Naive thymus-derived CD8-positive, alpha-beta T cell (primary cell): ENCODE measurements at regions of chr7 and their contacts with region 1.

Region 1: GRCh38 chr7:105849122-105849855 is 27.1 kb downstream of the ATXN7L1 start:
- DNase-seq: peak in 9 of 10 donors; percentile 6 to 80 (median 53)
- ATAC-seq: peak; percentile 90 to 94
- H3K4me3 Mint-ChIP-seq: peak overlapping the region; percentile 48 to 87 (median 76)
- H3K27ac Mint-ChIP-seq: peak overlapping the region; percentile 83 to 97 (median 91)
- H3K4me1 Mint-ChIP-seq: peaks cover 30 to 69% (median 64%) of the 10 kb centered on the region in 4 donors
- H3K27me3 Mint-ChIP-seq: no peaks in the 10 kb centered on the region

Region 2: GRCh38 chr7:105876091-105876963 is 27.0 kb after region 1 on chr7 and contains the start of gene ATXN7L1:
- POLR2A ChIA-PET with region 1: interaction called, 20 read pairs
- DNase-seq: peak; percentile 76 to 96 (median 86)
- ATAC-seq: peak; percentile 94 to 95
- H3K4me3 Mint-ChIP-seq: peak within 1 kb of the TSS; percentile 95 to 99 (median 98)
- H3K27ac Mint-ChIP-seq: peak within 1 kb of the TSS; percentile 87 to 98 (median 93)
- H3K4me1 Mint-ChIP-seq: peaks cover 29 to 54% (median 47%) of the 10 kb centered on the region in 4 donors
- H3K27me3 Mint-ChIP-seq: no peaks in the 10 kb centered on the region
- polyA plus RNA-seq, gene ATXN7L1: 6.7 to 12.7 (median 10.3) TPM